MCF 10A (cell line): ENCODE measurements at regions of chr1 and their contacts with region 1.

Region 1: DNA sequence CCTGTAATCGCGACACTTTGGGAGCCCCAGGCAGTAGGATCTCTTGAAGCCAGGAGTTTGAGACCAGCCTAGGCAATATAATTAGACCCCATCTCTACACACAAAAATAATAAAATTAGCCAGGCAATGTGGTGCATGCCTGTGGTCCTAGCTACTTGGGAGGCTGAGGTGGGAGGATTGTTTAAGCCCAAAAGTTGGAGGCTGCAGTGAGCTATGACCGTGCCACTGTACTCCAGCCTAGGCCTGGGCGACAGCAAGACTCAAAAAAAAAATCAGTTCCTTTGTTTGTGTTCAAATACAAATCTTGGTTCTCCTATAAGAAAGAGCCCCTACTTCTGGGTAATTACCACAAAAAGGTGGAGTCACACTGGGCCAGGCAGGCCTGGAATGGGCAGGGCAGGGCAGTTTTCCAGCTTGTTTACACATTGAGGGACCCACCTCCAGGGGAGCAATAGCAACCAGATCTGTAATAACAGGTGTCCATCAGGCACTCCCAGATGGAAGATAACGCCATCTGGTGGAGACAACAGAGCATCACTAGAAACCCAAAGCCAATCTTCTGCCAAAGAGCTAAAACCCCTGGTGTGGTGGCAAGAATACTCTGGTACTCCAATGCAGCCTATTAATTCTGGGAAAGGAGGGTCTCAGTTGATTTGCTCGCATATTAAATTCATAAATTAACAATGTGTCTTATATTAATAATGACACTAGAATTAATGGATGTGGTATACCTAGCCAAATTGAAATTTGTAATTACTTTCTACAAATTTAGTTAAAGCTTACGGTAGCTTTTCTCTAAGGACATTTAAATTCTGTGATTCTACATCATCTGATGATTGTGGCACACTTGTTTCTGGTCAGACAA is 13.2 kb downstream of the PPP1R15B start:
- DNase-seq: peak; percentile 97
- H3K4me3 Mint-ChIP-seq: no peak overlapping the region
- H3K27ac Mint-ChIP-seq: peak overlapping the region; percentile 84
- H3K4me1 Mint-ChIP-seq: no peaks in the 10 kb centered on the region
- H3K27me3 Mint-ChIP-seq: no peaks in the 10 kb centered on the region
- CTCF ChIP-seq: peak; percentile 98

Region 2: GRCh38 chr1:203754455-203754864 is 644.0 kb before region 1 on chr1:
- CTCF ChIA-PET with region 1: no interaction called
- POLR2A ChIA-PET with region 1: no interaction called
- intact Hi-C with region 1: no loop called
- DNase-seq: no peak
- H3K4me3 Mint-ChIP-seq: no peak overlapping the region
- H3K27ac Mint-ChIP-seq: peak overlapping the region; percentile 4
- H3K4me1 Mint-ChIP-seq: peaks cover 26% of the 10 kb centered on the region
- H3K27me3 Mint-ChIP-seq: no peaks in the 10 kb centered on the region
- CTCF ChIP-seq: no peak

Region 3: DNA sequence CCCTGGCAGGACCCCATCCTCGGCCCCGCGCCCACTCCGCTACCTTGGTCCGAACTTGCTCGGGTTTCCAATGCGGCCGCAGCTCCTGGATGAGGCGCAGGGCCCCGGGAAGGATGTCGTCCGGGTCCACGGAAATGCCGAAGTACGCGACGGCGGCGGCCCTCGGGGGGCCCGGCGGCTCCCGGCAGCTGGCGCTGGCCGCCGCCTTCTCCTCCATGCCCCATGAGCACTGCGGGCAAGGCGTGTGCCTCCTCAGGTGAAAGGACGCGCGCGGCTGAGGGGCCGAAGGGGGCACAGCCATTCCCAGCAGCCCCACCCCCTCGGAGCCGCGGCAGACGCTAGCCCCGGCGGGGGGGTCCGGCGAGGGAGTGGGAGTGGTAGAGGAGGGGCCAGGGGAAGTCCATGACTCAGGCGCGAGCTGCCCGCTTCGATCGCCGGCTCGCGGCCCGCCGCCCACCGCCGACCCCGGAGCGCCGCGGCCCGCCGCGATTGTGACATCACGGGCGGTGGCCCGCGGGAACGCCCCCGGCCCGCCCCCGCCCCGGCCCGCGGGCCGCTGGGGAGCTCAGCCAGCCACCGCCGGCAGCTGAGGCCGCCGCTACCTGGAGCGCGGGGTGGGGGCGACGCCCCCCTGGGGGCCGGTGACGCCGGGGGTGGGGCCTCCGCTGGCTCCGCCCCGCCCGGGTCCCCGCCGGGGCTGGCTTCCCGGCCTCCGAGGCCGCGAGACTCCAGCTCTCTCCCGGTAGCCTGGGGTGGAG is 246.7 kb before region 1 on chr1 and contains the start of gene ETNK2:
- CTCF ChIA-PET with region 1: interaction called, 12 read pairs
- POLR2A ChIA-PET with region 1: interaction called, 3 read pairs
- intact Hi-C with region 1: no loop called
- DNase-seq: peak; percentile 36
- H3K4me3 Mint-ChIP-seq: peak within 1 kb of the TSS; percentile 68
- H3K27ac Mint-ChIP-seq: peak within 1 kb of the TSS; percentile 78
- H3K4me1 Mint-ChIP-seq: peaks cover 48% of the 10 kb centered on the region
- H3K27me3 Mint-ChIP-seq: no peaks in the 10 kb centered on the region
- CTCF ChIP-seq: no peak
- total RNA-seq, gene ETNK2: 6.7 and 9.5 TPM in 2 replicates

Region 4: DNA sequence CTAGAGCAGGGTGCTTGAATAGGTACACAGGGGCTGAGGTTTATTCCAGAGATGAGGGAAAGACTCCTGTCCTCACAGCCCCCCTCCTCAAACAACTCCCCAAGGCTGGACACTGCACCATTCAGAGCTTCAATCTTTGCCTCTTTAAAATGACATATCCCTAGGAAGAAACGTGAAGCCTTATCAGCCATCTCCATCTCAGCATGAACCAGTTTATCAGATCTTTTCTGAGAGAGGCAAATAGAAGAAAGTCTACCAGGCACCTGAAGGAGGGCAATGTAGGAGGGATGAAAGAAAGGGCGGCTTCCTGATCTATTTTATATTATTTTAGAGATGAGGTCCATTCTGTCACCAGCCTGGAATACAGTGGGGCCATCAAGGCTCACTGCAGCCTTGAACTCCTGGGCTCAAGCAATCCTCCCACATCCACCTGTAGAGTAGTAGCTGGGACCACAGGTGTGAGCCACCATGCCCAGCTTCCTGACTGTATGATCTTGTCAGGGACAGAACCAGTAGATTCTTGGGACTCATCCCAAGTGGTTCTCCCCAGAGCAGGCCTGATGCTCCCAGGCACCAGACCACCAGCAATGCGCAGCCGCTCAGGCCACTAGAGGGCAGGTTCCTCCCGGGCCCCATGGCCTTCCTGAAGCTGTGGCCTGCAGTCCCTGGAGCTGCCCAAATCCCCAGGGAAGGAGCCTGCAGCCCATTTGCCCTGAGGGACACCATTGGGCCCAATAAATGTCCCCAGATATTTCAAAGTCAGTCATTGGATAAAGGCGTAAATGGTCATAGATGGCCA is 140.3 kb before region 1 on chr1:
- CTCF ChIA-PET with region 1: interaction called, 34 read pairs
- POLR2A ChIA-PET with region 1: no interaction called
- intact Hi-C with region 1: no loop called
- DNase-seq: peak; percentile 80
- H3K4me3 Mint-ChIP-seq: no peak overlapping the region
- H3K27ac Mint-ChIP-seq: peak overlapping the region; percentile 49
- H3K4me1 Mint-ChIP-seq: peaks cover 13% of the 10 kb centered on the region
- H3K27me3 Mint-ChIP-seq: no peaks in the 10 kb centered on the region
- CTCF ChIP-seq: peak; percentile 97

Region 5: GRCh38 chr1:204377795-204378608 is 20.4 kb before region 1 on chr1:
- CTCF ChIA-PET with region 1: interaction called, 82 read pairs
- POLR2A ChIA-PET with region 1: interaction called, 49 read pairs
- intact Hi-C with region 1: no loop called
- DNase-seq: peak; percentile 46
- H3K4me3 Mint-ChIP-seq: peak overlapping the region; percentile 70
- H3K27ac Mint-ChIP-seq: no peak overlapping the region
- H3K4me1 Mint-ChIP-seq: peaks cover 5% of the 10 kb centered on the region
- H3K27me3 Mint-ChIP-seq: no peaks in the 10 kb centered on the region
- CTCF ChIP-seq: no peak

Region 6: DNA sequence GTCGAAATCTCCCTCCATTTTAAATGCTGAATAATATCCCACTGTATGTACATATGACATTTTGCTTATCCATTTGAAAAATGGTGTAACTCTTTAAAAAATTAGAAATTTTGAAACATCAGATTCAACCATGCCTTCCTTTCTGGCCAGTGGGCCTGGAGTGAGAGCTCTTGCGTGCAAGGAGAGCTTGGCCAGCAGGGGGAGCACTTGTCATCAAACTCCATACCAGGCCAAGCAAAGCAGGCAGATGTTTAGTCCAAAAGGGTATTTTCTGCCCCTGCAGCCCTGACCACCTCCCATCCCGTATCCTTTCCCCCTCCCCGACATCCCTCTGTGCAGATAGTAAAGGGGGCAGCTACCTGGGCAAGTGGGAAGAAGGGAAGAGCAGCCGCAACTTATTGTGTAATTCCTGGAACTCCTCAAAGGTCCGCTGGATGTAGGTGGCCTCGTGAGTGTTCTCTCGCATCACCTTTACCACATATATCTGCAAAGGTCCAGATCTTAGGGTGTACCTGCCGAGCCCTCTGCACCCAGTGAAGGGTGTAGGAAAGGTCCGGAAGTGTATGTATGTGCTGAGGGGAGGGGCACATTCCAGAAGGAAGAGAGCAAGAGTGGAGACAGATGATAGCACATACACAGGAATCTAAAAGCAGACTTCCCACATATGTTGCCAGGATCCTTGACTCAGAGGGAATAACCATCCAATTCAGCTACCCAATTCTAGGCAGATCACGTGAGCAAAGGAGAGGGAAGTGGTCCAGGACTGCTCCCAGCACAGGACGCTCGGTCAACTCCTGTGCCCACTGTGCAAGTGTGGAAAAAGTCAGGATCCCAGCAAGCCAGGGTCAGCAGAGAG is 33.1 kb after region 1 on chr1:
- CTCF ChIA-PET with region 1: interaction called, 42 read pairs
- POLR2A ChIA-PET with region 1: interaction called, 7 read pairs
- intact Hi-C with region 1: no loop called
- DNase-seq: peak; percentile 88
- H3K4me3 Mint-ChIP-seq: no peak overlapping the region
- H3K27ac Mint-ChIP-seq: no peak overlapping the region
- H3K4me1 Mint-ChIP-seq: peaks cover 39% of the 10 kb centered on the region
- H3K27me3 Mint-ChIP-seq: no peaks in the 10 kb centered on the region
- CTCF ChIP-seq: peak; percentile 99

Region 7: DNA sequence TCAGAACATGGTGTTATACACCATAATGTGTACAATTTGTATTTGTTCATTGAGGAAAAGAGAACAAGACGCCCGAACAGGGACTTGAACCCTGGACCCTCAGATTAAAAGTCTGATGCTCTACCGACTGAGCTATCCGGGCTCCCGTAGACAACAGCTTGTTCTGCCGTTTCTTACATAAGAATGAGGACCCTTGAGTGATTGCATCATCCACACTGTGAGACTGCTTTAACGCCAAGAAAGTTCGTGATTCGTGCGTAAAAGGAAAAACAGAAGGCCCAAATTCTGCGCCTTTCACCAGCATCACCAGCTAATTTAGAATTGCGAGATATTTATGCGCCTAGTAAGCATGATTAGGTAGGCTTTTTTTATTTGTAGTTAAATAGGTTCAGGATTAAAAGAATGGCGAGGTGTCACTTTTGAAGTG is 108.5 kb after region 1 on chr1:
- CTCF ChIA-PET with region 1: interaction called, 81 read pairs
- POLR2A ChIA-PET with region 1: interaction called, 142 read pairs
- intact Hi-C with region 1: loop called (anchors 1 kb)
- DNase-seq: peak; percentile 98
- H3K4me3 Mint-ChIP-seq: peak overlapping the region; percentile 77
- H3K27ac Mint-ChIP-seq: peak overlapping the region; percentile 90
- H3K4me1 Mint-ChIP-seq: peaks cover 29% of the 10 kb centered on the region
- H3K27me3 Mint-ChIP-seq: no peaks in the 10 kb centered on the region
- CTCF ChIP-seq: no peak

Region 8: DNA sequence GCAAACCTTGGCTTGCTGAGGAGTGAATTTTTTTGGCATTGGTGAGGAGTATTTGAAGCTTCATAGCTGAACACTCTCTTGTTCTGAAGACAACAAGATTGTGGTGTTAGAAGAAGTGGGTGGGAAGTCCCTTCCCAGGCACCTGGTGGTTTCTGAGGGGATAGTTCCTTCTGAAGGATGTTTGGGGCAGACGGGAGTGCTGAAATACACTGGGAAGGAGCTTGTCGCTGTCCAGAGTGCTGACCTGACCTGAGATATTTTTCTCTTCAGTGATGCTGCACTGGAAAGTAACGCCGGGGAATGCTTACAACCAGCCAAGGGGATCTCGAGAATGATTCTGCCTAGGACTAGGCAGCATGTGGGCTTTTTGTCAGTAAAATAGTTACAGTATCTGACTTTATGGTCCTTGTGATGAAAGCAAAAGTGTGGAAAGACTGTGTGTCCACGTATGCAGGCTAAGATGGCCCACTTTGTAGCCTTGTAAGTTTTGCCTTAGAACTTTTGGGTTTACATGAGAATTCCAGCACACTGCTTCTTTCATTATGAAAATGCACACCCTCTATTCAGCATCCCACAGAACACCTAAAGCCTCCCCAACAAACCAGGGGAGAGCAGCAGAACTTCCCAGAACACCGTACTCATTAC is 439.1 kb after region 1 on chr1:
- CTCF ChIA-PET with region 1: no interaction called
- POLR2A ChIA-PET with region 1: no interaction called
- intact Hi-C with region 1: no loop called
- DNase-seq: peak; percentile 79
- H3K4me3 Mint-ChIP-seq: no peak overlapping the region
- H3K27ac Mint-ChIP-seq: no peak overlapping the region
- H3K4me1 Mint-ChIP-seq: no peaks in the 10 kb centered on the region
- H3K27me3 Mint-ChIP-seq: peaks cover 59% of the 10 kb centered on the region
- CTCF ChIP-seq: no peak